Activated T-helper 2 cell treated with anti-CD3 and anti-CD28 coated beads, Interferon-gamma antibody, Interleukin-2, Interleukin-4, amounts not matched to agents 10 μg/mL and 5 μg/mL and 100 μg/mL, durations not matched to agents 14 hours and 24 hours and 36 hours (primary cell): ENCODE measurements at regions of chr3 and their contacts with region 1.

Region 1: GRCh38 chr3:133494469-133494868 is 79.0 kb upstream of the CDV3 start:
- DNase-seq: no peak
- H3K4me3 Mint-ChIP-seq: no peak overlapping the region
- H3K27ac Mint-ChIP-seq: no peak overlapping the region
- H3K4me1 Mint-ChIP-seq: peaks cover 49% of the 10 kb centered on the region
- H3K27me3 Mint-ChIP-seq: no peaks in the 10 kb centered on the region

Region 2: GRCh38 chr3:133475245-133476010 is 19.0 kb before region 1 on chr3:
- intact Hi-C with region 1: loop called (anchors 2 kb)
- DNase-seq: peak; percentile 37
- H3K4me3 Mint-ChIP-seq: peak overlapping the region; percentile 4
- H3K27ac Mint-ChIP-seq: peak overlapping the region; percentile 34
- H3K4me1 Mint-ChIP-seq: peaks cover 53% of the 10 kb centered on the region
- H3K27me3 Mint-ChIP-seq: no peaks in the 10 kb centered on the region

Region 3: DNA sequence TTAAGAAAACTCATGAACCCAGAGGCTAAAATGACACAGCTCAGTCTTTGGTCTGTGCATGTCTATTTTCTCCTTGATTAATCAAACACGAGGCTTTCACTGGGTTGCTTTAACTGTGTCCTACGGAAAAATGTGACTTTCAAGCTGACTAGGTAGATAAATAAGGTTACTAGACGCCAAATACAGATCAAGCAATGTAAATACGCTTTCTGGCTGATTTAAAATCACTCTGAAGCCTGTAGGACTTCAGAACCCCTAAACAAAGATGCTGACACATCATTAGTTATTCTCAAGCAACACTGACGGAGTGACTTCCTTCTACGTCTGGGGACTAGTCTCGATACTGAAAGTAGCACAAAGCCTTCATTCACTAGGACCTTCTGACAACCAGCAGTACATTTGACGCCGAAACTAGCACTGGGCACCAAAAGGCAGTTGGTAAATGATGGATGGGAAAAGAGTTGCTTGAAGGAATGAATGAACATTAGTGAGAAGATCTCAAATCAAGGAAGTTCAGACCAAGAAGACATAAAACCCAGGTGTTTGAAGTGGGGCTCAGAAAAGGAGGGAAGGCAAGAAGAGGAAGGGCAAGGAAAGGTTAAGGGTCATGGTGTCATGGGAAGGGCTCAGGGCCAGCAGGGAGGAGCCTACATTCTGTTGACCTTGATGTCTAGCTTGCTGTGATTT is 11.9 kb after region 1 on chr3:
- intact Hi-C with region 1: loop called (anchors 1 kb)
- DNase-seq: peak; percentile 35
- H3K4me3 Mint-ChIP-seq: peak overlapping the region; percentile 35
- H3K27ac Mint-ChIP-seq: peak overlapping the region; percentile 89
- H3K4me1 Mint-ChIP-seq: peaks cover 19% of the 10 kb centered on the region
- H3K27me3 Mint-ChIP-seq: no peaks in the 10 kb centered on the region